ENCODE measurements at regions of chr14 and their contacts with region 1.

Region 1: DNA sequence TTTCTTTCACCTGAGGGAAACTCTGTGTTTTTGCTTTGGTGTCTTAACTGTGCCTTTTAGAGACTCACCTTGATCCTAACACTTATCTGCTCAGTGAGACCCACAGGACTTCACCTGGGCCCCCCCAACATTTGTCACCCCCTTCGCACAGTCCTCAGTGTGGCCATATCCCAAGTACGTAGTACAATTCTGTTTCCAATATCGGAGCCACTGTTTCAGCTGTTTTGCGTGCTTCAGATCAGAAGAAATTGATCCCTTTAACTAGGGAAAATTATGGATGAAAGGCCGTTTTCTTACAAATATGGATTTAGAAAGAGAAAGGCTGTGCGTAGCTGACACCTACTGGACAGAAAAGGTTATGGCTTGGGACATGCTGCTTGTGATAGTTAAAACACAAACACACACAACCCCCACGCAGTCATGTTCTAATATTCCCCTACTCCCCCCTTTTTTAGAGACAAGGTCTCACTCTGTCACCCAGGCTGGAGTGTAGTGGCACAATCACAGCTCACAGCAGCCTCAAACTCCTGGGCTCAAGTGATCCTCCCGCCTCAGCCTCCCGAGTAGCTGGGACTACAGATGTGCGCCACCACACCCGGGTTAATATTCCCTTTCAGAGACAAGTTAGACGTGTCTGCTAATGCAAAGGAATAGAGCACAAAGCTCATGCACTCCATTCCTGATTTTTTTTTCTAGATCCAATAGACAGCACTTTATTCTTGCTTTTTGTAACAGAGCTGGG is 3.6 kb upstream of the SLC7A8 start:
- DNase-seq: peak; percentile 61
- ATAC-seq: no peak
- H3K4me3 ChIP-seq: no peak overlapping the region
- H3K4me3 Mint-ChIP-seq: no peak overlapping the region
- H3K27ac ChIP-seq: no peak overlapping the region
- H3K27ac Mint-ChIP-seq: no peak overlapping the region
- H3K4me1 ChIP-seq: peaks cover 9 to 17% of the 10 kb centered on the region in 2 donors
- H3K4me1 Mint-ChIP-seq: no peaks in the 10 kb centered on the region
- H3K27me3 ChIP-seq: peaks cover 0 to 8% (median 1%) of the 10 kb centered on the region in 4 experiments
- H3K27me3 Mint-ChIP-seq: no peaks in the 10 kb centered on the region
- CTCF ChIP-seq: peak; percentile 68

Region 2: GRCh38 chr14:21933681-21934080 is 1253.4 kb before region 1 on chr14:
- CTCF ChIA-PET with region 1: no interaction called
- POLR2A ChIA-PET with region 1: no interaction called
- intact Hi-C with region 1: no loop called
- DNase-seq: peak; percentile 65
- ATAC-seq: peak; percentile 57
- H3K4me3 ChIP-seq: no peak overlapping the region
- H3K4me3 Mint-ChIP-seq: no peak overlapping the region
- H3K27ac ChIP-seq: no peak overlapping the region
- H3K27ac Mint-ChIP-seq: no peak overlapping the region
- H3K4me1 ChIP-seq: no peaks in the 10 kb centered on the region
- H3K4me1 Mint-ChIP-seq: no peaks in the 10 kb centered on the region
- H3K27me3 ChIP-seq: no peaks in the 10 kb centered on the region
- H3K27me3 Mint-ChIP-seq: no peaks in the 10 kb centered on the region
- CTCF ChIP-seq: peak; percentile 85

Region 3: GRCh38 chr14:23068476-23069412 is 118.3 kb before region 1 on chr14:
- CTCF ChIA-PET with region 1: interaction called, 18 read pairs
- POLR2A ChIA-PET with region 1: no interaction called
- intact Hi-C with region 1: loop called (anchors 1 kb)
- DNase-seq: peak; percentile 87
- ATAC-seq: peak; percentile 85
- H3K4me3 ChIP-seq: no peak overlapping the region
- H3K4me3 Mint-ChIP-seq: no peak overlapping the region
- H3K27ac ChIP-seq: peak overlapping the region; percentile 10 to 28
- H3K27ac Mint-ChIP-seq: peak overlapping the region; percentile 83
- H3K4me1 ChIP-seq: peaks cover 21 to 41% of the 10 kb centered on the region in 2 donors
- H3K4me1 Mint-ChIP-seq: peaks cover 38% of the 10 kb centered on the region
- H3K27me3 ChIP-seq: no peaks in the 10 kb centered on the region
- H3K27me3 Mint-ChIP-seq: no peaks in the 10 kb centered on the region
- CTCF ChIP-seq: peak; percentile 99

Region 4: GRCh38 chr14:23076785-23077408 is 110.2 kb before region 1 on chr14:
- CTCF ChIA-PET with region 1: interaction called, 31 read pairs
- POLR2A ChIA-PET with region 1: no interaction called
- intact Hi-C with region 1: no loop called
- DNase-seq: peak; percentile 62
- ATAC-seq: peak; percentile 66
- H3K4me3 ChIP-seq: no peak overlapping the region
- H3K4me3 Mint-ChIP-seq: no peak overlapping the region
- H3K27ac ChIP-seq: no peak overlapping the region
- H3K27ac Mint-ChIP-seq: no peak overlapping the region
- H3K4me1 ChIP-seq: peaks cover 2 to 4% of the 10 kb centered on the region in 2 donors
- H3K4me1 Mint-ChIP-seq: peaks cover 9% of the 10 kb centered on the region
- H3K27me3 ChIP-seq: no peaks in the 10 kb centered on the region
- H3K27me3 Mint-ChIP-seq: no peaks in the 10 kb centered on the region
- CTCF ChIP-seq: peak; percentile 83

Region 5: DNA sequence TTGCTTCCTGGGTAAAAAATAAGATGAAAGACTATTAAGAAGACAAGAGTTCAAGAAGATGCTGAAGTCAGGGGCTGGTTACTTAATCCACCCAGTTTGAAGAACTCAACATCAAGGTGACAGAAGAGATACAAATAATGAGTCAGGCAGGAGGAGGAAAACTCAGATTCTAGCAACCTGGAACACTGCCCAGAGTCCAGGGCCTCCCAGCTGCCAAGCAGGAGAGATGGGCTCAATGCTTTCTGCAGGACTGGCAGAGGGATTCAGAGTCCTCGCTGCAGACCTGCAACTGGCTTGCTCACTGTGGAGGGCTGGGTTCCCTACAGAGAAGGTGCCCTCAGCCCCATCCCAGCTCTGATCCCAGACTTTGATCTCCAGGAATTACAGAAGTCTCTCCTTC is 39.4 kb before region 1 on chr14:
- CTCF ChIA-PET with region 1: no interaction called
- POLR2A ChIA-PET with region 1: no interaction called
- intact Hi-C with region 1: no loop called
- DNase-seq: no peak
- ATAC-seq: no peak
- H3K4me3 ChIP-seq: no peak overlapping the region
- H3K4me3 Mint-ChIP-seq: no peak overlapping the region
- H3K27ac ChIP-seq: no peak overlapping the region
- H3K27ac Mint-ChIP-seq: no peak overlapping the region
- H3K4me1 ChIP-seq: no peaks in the 10 kb centered on the region
- H3K4me1 Mint-ChIP-seq: peaks cover 6% of the 10 kb centered on the region
- H3K27me3 ChIP-seq: no peaks in the 10 kb centered on the region
- H3K27me3 Mint-ChIP-seq: peaks cover 12% of the 10 kb centered on the region
- CTCF ChIP-seq: no peak

Region 6: DNA sequence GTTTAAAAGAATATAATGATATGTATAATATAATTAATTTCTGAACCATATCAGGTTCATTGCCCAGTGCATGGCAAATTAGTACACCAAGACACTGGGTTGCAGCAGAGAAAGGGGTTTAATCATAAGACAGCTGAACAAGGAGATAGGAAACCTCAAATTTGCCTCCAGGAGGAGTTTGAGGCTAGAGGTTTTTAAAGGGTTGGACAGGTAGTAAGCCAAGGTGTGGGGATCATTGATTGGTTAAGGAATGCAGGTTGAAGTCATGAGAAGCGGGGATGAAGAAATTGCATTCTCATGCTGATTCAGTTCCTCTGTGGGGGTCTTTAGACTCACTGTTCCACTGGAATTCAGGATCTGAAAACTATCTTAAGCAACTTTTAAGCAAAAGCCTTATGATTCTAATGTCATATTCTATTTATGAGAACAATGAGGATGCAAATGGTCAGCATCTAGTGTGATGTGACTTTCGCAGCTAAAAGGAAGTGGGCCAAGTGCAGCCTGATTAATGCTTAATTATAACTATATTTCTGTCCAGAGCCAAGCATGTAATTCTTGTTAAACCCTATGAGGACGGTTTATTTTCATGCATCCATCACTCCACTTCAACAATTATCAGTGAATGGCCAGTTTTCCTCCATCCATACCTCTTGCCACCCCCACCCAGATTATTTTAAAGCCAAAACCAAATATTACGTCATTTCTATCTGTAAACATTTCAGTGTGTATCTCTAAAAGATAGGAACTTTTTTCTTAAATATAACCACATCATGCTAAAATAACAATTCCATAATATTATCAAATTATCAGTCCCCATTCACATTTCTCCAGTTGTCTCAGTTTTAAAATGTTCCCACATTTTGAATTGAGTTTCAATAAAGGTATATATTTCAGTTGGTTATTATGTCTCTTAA is 65.6 kb after region 1 on chr14:
- CTCF ChIA-PET with region 1: no interaction called
- POLR2A ChIA-PET with region 1: no interaction called
- intact Hi-C with region 1: no loop called
- DNase-seq: no peak
- ATAC-seq: no peak
- H3K4me3 ChIP-seq: no peak overlapping the region
- H3K4me3 Mint-ChIP-seq: no peak overlapping the region
- H3K27ac ChIP-seq: no peak overlapping the region
- H3K27ac Mint-ChIP-seq: no peak overlapping the region
- H3K4me1 ChIP-seq: no peaks in the 10 kb centered on the region
- H3K4me1 Mint-ChIP-seq: no peaks in the 10 kb centered on the region
- H3K27me3 ChIP-seq: peaks cover 0 to 6% (median 0%) of the 10 kb centered on the region in 4 experiments
- H3K27me3 Mint-ChIP-seq: peaks cover 40% of the 10 kb centered on the region
- CTCF ChIP-seq: no peak